ENCODE measurements at regions of chr10 and their contacts with region 1.

Region 1: GRCh38 chr10:70272925-70273316 is 10.9 kb downstream of the NPFFR1 start:
- DNase-seq: peak; percentile 49
- H3K4me3 ChIP-seq: peak overlapping the region in 1 of 2 experiments; percentile 21; a peak in 1 of 4 replicates
- H3K27ac ChIP-seq: no peak overlapping the region
- H3K4me1 ChIP-seq: peaks cover 0 to 2% of the 10 kb centered on the region in 2 experiments; a peak in 1 of 4 replicates
- H3K27me3 ChIP-seq: no peaks in the 10 kb centered on the region
- CTCF ChIP-seq: peak; percentile 64
- EP300 ChIP-seq: no peak
- RAD21 ChIP-seq: peak; percentile 55

Region 2: DNA sequence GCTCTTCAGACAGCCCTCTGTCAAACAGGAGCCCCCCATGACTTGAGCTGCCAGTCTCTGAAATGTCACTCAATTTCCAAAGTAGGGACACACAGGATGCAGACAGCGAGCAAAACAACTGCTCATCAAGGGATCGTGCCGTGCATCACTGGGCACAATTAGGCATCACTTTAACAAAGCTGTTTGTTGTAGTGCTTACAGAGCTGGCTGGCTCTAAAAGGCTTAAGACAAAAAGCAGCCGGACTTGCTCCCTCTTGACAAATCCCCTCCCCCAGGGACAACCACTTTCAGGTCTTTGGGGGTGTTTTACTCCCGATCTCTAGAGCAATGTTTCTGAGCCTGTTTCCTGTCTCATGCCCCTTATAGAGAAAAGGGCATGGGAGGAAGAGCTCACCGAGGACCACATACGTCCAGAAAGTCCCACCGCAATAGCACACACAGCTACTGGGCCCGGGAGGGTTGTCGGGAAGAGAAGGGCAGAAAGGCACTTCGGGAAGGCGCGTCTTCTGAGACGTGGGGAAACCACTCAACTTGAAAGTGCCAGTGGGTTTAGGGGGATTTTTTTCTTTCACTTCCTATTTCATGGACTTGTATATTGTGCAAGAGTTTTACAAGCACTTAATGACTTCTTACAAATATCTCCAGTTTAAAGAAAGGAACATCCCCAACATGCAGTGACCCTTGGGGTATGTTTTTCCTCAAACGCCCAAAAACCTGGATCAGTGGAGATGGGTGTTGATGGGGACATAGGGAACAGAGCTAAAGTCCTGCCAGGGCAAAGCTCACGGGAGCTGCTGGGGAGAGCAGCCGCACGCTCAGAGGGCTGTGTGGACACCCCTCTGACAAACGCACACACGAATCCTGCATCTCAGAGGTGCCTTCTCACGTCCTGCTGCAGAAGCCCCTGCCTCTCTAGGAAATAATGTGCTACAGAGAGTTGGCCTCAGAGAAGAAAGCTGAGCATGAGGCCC is 82.4 kb after region 1 on chr10:
- CTCF ChIA-PET with region 1: interaction called, 10 read pairs
- POLR2A ChIA-PET with region 1: no interaction called
- DNase-seq: no peak
- H3K4me3 ChIP-seq: no peak overlapping the region
- H3K27ac ChIP-seq: peak overlapping the region in 1 of 2 experiments; percentile 75; a peak in 2 of 4 replicates
- H3K4me1 ChIP-seq: peaks cover 0 to 33% of the 10 kb centered on the region in 2 experiments; a peak in 3 of 4 replicates
- H3K27me3 ChIP-seq: no peaks in the 10 kb centered on the region
- CTCF ChIP-seq: no peak
- EP300 ChIP-seq: no peak
- RAD21 ChIP-seq: no peak

Region 3: DNA sequence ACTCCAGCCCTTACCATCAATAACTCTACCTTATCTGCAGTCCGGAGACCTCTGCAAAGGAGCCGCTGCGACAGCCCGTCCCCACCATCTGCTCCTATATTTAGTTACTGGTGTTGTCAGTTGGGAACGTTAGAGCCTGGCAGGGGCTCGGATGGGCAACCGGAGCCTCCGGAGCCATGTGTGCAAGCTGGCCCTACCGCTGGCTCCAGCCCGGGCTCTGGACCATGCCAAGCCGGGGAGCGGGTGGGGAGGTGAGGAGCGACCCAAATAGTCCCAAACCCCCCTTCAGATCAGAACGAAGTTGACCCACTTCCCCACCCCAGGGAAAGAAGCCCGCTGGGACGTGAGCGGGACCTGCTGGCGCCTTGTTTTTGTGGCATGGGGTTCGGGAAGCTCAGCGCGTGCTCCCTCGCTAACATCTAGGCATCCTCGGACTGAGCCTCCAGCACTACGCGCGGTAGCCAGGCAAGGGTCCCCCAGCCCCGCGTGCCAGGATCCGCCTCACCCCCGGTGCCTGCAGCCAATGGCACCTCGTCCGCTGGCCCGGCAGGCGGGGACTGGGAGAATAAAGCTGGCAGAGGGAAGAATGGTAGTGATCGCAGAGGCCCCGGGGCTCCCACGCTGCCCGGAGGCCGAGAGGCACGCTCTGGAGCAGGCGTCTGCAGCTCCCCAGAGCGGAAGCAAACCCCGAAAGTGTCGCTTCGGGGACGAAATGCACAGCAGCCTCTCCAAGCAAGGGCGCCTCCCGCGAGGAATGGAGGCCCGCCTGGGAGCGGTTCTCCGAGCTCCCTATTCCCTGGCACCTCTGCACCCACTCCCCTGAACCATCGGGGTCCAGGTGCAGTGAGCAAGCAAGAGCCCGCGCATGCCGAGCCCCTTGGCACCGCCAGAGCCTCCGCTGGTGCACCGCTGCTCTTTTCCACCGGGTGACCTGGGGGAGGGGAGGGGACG is 108.8 kb after region 1 on chr10:
- CTCF ChIA-PET with region 1: interaction called, 10 read pairs
- POLR2A ChIA-PET with region 1: no interaction called
- DNase-seq: peak; percentile 92
- H3K4me3 ChIP-seq: peak overlapping the region; percentile 89 to 96
- H3K27ac ChIP-seq: peak overlapping the region; percentile 38 to 89
- H3K4me1 ChIP-seq: peaks cover 11 to 20% of the 10 kb centered on the region in 2 experiments; a peak in 3 of 4 replicates
- H3K27me3 ChIP-seq: no peaks in the 10 kb centered on the region
- CTCF ChIP-seq: 0 out of 2 replicates have a peak, but pooled peaks have one; percentile 31
- EP300 ChIP-seq: no peak
- RAD21 ChIP-seq: no peak

Measured in SK-N-SH (cell line).